Right cardiac atrium (tissue), 5 donors: ENCODE measurements at regions of chr4 and their contacts with region 1.

Region 1: DNA sequence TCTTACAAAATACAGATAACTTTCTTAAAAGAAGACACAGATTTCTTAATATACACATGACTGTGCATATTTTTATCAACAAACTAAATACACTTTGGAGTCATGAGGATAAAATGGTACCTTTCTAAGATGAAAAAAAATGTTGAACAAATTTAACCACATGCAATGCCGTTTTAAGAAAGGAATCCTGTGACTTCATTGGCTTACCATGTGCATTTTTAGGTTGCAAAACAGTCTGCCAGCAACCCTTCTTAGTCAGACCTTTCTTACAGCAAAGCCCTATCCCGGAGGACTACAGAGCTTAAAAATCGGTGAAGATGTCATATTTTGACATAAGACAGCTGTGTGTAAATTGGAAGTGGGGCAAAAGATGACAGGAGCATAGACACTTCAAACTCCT is 51.6 kb downstream of the GASK1B start:
- DNase-seq: peak in 1 of 3 donors; percentile 30
- ATAC-seq: peak; percentile 93 to 94
- H3K4me3 ChIP-seq: no peak overlapping the region
- H3K27ac ChIP-seq: no peak overlapping the region
- H3K4me1 ChIP-seq: peaks cover 3% of the 10 kb centered on the region
- H3K27me3 ChIP-seq: no peaks in the 10 kb centered on the region

Region 2: DNA sequence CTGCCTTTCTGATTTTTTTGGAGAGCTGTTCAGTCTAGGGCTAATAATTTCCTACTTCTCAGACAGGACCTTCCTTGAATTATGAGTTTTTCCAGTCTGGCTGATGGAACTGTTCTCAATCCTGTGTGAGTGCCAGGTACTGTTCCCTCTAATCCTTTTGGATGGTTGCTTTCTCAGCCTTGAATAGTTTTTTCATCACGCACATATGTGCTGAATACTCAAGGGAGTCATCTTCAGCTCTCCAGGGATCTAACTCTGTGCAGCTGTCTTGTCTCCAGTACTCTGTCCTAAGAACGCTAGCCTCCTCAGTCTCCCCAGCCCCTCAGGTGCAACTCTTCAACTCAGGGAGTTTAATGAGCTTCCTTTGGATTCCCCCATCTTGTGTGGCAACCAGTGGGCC is 41.5 kb before region 1 on chr4:
- intact Hi-C with region 1: loop called in 1 of 4 experiments (anchors 10 kb)
- DNase-seq: no peak
- ATAC-seq: no peak
- H3K4me3 ChIP-seq: no peak overlapping the region
- H3K27ac ChIP-seq: no peak overlapping the region
- H3K4me1 ChIP-seq: no peaks in the 10 kb centered on the region
- H3K27me3 ChIP-seq: no peaks in the 10 kb centered on the region